ENCODE measurements at regions of chr1 and their contacts with region 1.

Region 1: DNA sequence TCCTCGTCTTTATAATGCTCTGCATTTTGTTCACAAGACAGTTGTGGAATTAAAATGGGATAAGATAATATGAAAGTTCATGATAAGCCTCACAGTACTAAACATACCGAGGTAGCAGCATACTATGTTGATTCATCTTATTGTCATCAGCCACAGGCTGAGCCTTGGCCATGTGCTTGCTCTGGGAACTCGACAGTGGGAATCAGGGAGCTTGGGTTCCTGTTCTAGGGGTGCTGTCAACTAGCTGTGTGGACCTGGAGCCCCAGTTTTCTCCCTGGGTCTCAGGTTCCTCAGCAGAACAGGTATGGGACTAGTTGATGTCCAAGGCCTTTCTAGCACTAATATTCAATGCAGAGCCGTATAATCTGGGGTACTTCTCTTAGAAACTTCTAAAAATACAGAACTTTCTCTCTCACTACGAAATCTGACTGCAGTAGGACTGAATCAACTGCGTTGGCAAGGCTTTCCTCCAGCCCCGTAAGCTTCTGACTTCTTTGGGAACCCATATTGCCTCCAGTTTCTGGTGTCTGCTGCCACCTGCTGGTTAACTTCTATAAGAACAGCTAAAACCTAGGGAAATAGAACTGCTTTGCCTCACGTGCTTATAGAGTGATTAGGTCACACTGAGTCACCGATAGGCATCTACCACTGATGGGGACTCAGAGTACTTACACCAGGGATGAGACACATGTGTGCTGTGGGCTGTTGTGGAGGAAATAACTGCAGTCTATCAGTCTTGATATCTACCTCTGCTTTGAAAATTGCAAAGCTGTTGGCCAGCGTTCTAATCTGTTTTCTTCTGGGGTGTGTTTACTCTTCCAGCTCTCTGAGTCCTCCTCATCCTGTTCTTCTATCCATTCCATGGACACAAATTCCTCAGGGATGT is 110.9 kb downstream of the RGL1 start:
- H3K4me3 Mint-ChIP-seq: peak overlapping the region; percentile 6
- H3K27ac Mint-ChIP-seq: peak overlapping the region; percentile 82
- H3K4me1 Mint-ChIP-seq: peaks cover 60% of the 10 kb centered on the region
- H3K27me3 Mint-ChIP-seq: no peaks in the 10 kb centered on the region

Region 2: DNA sequence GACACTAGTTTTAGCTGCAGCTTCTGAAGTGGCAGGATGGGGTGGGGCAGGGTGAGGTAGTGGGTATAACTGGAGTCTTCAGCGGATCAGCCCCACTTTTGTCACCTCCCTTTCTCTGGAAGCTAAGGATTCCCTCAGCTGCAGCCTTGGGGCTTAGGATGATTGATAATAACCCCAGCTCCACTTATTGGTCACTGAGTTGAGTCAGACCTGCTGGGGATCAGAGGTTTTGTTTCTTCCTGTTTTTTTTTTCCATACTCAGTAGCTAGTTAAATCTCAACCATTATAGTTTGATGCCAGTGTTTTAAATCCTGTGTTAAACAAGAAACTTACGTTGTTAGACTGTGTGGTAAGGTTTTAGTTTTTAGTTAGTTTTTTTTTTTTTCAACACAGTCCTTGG is 835.5 kb before region 1 on chr1:
- intact Hi-C with region 1: no loop called
- H3K4me3 Mint-ChIP-seq: no peak overlapping the region
- H3K27ac Mint-ChIP-seq: no peak overlapping the region
- H3K4me1 Mint-ChIP-seq: no peaks in the 10 kb centered on the region
- H3K27me3 Mint-ChIP-seq: no peaks in the 10 kb centered on the region

Region 3: DNA sequence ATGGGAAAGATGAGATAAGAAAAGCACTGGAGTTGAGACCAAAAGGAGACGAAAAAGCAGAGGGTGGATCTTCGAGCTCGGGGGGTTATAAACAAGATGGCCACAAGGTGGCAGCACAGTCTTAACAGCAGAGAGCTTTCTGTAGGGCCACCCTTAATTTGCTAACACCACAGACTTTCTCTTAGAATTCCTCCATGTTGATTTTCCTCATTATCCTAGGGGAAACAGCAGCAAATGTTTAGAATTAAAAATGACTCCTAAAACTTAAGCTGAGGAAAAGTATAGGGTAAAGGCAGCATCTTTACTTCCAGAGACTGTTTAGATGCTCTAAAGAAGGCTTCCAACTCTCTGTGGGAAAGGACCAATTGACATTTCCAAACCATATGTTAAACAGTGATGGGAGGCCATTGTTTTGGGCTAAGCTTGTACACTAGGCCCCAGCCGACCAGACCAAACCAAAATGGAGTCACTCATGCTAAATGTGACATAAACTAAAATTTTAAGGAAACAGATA is 260.2 kb before region 1 on chr1:
- intact Hi-C with region 1: loop called (anchors 5 kb)
- H3K4me3 Mint-ChIP-seq: no peak overlapping the region
- H3K27ac Mint-ChIP-seq: peak overlapping the region; percentile 58
- H3K4me1 Mint-ChIP-seq: peaks cover 29% of the 10 kb centered on the region
- H3K27me3 Mint-ChIP-seq: peaks cover under 1% of the 10 kb centered on the region

Region 4: DNA sequence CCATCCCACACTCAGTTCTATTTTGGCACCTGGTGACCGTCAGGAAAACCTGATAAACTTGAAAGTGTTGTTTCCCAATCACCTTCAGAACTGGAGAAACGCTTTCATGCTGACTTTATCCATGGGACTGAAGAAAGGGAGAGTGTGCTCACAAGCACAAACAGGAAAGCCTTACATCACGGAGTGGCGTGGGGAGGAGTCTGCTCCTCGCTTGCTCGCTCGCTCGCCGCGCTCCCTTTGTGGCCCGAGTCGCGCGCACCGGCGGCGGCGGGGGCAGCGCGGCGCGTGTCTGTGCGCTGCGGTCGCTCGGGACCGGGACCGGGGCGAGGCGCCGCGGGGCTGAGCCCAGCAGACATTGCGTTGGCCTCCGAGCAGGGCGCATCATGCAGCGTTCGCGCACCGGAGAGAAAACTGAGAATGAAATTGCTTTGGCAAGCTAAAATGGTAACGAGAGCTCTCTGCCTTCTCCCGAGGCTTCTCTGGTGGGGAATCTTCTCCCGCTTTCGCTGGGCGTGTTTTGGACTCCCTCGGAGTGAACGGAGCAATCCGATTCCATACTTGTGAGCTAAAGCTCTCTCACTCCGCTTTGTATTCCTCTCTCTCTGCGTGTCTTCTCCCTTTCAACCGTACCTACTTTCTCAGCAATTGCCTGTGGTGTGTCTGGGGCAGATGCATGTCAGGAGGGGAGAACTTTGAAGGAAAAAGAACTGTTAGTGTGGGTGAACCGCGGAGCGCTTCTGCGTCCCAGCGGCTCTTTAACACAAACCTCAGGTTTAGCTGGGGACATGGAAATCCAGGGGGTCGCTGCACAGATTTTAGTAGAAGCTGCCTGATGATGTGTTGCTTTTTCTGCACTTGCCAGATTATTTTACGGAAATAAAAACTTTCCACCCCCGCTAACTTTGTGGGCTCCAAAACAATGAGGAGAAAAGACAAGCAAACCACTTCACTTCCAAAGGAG is 110.7 kb before region 1 on chr1 and contains the start of gene RGL1:
- intact Hi-C with region 1: loop called (anchors 5 kb)
- H3K4me3 Mint-ChIP-seq: peak within 1 kb of the TSS; percentile 94
- H3K27ac Mint-ChIP-seq: peak within 1 kb of the TSS; percentile 99
- H3K4me1 Mint-ChIP-seq: peaks cover 43% of the 10 kb centered on the region
- H3K27me3 Mint-ChIP-seq: peaks cover 3% of the 10 kb centered on the region

Region 5: DNA sequence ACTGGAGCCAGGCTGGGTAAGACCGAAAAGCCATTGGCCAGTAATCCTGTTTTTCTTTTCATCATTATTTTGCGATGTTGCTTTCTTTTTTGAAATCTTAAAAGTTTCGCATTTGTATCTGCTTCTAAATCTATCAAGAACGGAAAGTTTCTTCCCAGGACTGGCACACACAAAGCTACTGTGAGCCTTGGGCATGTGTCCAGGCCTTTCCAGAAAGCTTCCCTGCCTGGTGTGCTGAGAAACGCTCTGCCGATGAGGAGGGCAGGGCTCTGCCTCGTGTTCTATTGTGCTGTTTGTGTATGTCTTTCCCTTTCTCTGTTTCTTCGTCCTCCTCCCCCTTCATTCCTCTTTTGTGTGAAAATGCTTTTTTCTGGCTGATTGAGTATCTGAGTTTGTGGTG is 38.5 kb before region 1 on chr1:
- intact Hi-C with region 1: loop called (anchors 5 kb)
- H3K4me3 Mint-ChIP-seq: no peak overlapping the region
- H3K27ac Mint-ChIP-seq: peak overlapping the region; percentile 86
- H3K4me1 Mint-ChIP-seq: peaks cover 78% of the 10 kb centered on the region
- H3K27me3 Mint-ChIP-seq: no peaks in the 10 kb centered on the region

Region 6: DNA sequence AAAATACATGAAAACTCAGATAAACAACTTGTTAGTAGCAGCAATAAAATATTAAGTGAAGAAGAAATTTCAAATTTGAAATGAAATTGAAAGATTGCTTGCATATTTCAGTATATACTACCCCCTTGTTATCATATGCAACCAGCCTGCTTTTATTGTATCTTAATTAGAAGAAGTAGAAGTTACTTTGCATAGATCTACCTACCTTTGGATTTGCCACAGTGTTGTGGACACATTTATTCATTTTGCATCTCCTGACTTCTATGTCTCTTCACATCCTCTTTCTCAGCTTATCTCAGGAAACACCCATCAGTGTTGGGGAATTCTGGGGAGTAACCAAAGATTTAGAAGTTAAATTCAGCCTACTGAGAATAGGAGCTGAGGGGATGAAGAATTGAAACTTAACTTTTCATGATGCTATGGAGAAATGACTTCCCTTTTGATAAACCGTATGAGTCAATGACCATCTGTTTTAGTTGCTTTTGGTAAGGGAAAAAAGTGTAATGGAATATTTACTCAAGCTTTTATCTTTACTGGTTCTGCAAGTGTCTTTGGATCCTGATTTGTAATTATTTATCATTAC is 14.0 kb before region 1 on chr1:
- intact Hi-C with region 1: loop called (anchors 1 kb)
- H3K4me3 Mint-ChIP-seq: peak overlapping the region; percentile 63
- H3K27ac Mint-ChIP-seq: peak overlapping the region; percentile 100
- H3K4me1 Mint-ChIP-seq: peaks cover 73% of the 10 kb centered on the region
- H3K27me3 Mint-ChIP-seq: no peaks in the 10 kb centered on the region